Activated naive CD4-positive, alpha-beta T cell treated with anti-CD3 and anti-CD28 coated beads for 36 hours (primary cell): ENCODE measurements at regions of chr12 and their contacts with region 1.

Region 1: DNA sequence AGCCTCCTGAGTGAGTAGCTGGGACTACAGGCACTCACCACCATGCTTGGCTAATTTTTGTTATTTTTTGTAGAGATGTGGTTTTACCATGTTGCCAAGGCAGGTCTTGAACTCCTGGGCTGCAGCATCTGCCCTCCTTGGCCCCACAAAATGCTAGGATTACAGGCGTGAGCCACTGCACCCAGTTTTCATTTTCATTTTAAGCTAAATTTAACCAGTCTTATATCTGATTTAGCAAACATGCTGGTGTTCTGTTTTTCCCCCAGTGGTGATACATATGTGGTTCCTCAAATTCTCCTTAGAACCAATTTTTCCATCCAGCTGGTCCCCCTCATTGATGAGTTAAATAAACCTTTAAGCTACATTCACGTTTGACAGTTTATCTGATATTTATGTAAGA is 43.8 kb upstream of the BICD1 start:
- DNase-seq: no peak
- H3K4me3 Mint-ChIP-seq: no peak overlapping the region
- H3K27ac Mint-ChIP-seq: no peak overlapping the region
- H3K4me1 Mint-ChIP-seq: peaks cover 11% of the 10 kb centered on the region
- H3K27me3 Mint-ChIP-seq: no peaks in the 10 kb centered on the region

Region 2: DNA sequence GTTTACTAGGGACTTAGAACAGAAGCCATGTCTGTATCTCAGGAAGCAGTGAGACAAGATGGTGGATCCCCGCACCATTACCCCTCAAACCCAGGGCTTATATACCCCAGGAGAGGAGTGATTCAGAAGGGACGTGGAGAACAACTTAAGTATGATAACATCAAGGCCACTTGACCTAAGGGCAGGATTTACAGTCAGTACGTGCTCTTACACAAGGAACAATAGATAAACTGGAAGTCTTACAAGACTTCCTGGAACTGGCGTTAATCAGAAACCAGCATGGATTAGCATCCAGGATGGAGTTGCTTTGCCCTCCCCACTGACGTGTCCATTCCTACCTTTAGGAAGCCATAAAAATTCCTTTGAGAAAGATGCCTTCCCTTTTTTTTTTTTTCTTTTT is 412.0 kb before region 1 on chr12:
- CTCF ChIA-PET with region 1: interaction called, 10 read pairs
- intact Hi-C with region 1: loop called (anchors 1 kb)
- DNase-seq: no peak
- H3K4me3 Mint-ChIP-seq: no peak overlapping the region
- H3K27ac Mint-ChIP-seq: no peak overlapping the region
- H3K4me1 Mint-ChIP-seq: peaks cover 10% of the 10 kb centered on the region
- H3K27me3 Mint-ChIP-seq: no peaks in the 10 kb centered on the region

Region 3: GRCh38 chr12:31682136-31682962 is 380.5 kb before region 1 on chr12:
- CTCF ChIA-PET with region 1: interaction called, 7 read pairs
- intact Hi-C with region 1: loop called (anchors 1 kb)
- DNase-seq: peak; percentile 83
- H3K4me3 Mint-ChIP-seq: no peak overlapping the region
- H3K27ac Mint-ChIP-seq: peak overlapping the region; percentile 84
- H3K4me1 Mint-ChIP-seq: peaks cover 5% of the 10 kb centered on the region
- H3K27me3 Mint-ChIP-seq: no peaks in the 10 kb centered on the region

Region 4: DNA sequence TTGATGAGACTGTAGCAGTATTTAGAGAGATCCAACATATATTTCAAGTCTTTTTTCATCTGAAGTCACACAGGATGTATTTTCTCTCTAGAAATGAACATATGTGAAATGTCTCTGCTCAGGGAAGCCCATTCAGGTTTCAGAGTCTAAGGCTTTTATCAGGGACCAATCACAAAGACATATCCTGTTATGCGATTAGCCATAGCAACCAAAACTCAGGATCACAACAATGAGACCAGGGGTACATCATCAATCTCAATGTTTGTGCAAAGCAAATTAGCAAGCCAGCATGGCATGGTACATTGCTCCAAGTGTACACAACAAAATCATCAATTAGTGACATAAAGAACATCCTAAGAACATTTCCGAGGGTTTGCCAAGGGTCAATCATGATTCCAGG is 234.8 kb before region 1 on chr12:
- CTCF ChIA-PET with region 1: no interaction called
- intact Hi-C with region 1: no loop called
- DNase-seq: no peak
- H3K4me3 Mint-ChIP-seq: no peak overlapping the region
- H3K27ac Mint-ChIP-seq: no peak overlapping the region
- H3K4me1 Mint-ChIP-seq: peaks cover 42% of the 10 kb centered on the region
- H3K27me3 Mint-ChIP-seq: no peaks in the 10 kb centered on the region